Calu3 (cell line): ENCODE measurements at regions of chr5 and their contacts with region 1.

Region 1: GRCh38 chr5:104800436-104801048 is 1238.0 kb upstream of the NUDT12 start:
- DNase-seq: peak; percentile 48
- H3K4me3 Mint-ChIP-seq: no peak overlapping the region
- H3K27ac Mint-ChIP-seq: no peak overlapping the region
- H3K4me1 Mint-ChIP-seq: no peaks in the 10 kb centered on the region
- H3K27me3 Mint-ChIP-seq: no peaks in the 10 kb centered on the region
- CTCF ChIP-seq: peak; percentile 81

Region 2: DNA sequence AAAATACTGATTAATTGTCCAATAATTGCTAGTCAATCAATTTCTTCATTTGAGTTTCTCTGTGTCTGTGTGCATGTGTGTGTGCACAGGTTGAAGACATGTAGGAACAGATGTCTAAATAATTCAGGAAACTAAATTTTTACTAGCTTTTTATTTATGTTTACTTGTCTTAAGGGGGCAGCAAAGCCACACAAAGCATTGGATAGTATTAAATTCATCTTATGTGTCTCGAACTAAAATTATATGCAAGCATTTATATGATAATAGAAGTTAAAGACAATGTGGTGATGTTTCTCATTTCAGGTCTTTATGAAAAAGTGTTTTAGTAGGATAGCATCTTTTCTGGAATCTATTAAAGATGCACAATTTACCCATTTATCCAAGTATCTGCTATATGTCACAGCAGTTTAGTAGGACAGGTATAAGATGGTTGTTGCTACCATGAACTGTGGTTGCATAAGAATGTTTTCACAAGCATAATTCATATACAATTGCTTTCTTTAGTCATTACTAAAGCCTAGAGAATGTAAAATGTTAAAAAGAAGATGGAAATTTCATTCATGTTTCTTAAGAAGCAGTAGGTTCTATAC is 453.3 kb before region 1 on chr5:
- CTCF ChIA-PET with region 1: interaction called, 5 read pairs
- intact Hi-C with region 1: loop called (anchors 1 kb)
- DNase-seq: no peak
- H3K4me3 Mint-ChIP-seq: no peak overlapping the region
- H3K27ac Mint-ChIP-seq: no peak overlapping the region
- H3K4me1 Mint-ChIP-seq: no peaks in the 10 kb centered on the region
- H3K27me3 Mint-ChIP-seq: no peaks in the 10 kb centered on the region
- CTCF ChIP-seq: no peak

Region 3: DNA sequence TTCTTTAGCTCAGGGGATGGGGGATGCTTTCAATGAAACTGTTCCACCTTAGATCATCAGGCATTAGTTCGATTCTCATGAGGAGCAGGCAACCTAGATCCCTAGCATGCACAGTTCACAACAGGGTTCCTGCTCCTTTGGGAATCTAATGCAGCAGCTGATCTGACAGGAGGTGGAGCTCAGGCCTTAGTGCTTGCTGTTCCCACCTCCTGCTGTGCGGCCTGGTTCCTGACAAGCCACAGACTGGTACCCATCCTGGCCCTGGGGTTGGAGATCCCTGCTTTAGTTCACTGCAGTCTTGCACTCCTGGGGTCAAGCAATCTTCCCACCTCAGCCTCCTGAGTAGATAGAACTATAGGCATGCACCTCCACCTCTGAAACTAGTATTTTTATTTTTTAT is 131.9 kb after region 1 on chr5:
- CTCF ChIA-PET with region 1: no interaction called
- intact Hi-C with region 1: no loop called
- DNase-seq: no peak
- H3K4me3 Mint-ChIP-seq: no peak overlapping the region
- H3K27ac Mint-ChIP-seq: no peak overlapping the region
- H3K4me1 Mint-ChIP-seq: no peaks in the 10 kb centered on the region
- H3K27me3 Mint-ChIP-seq: no peaks in the 10 kb centered on the region
- CTCF ChIP-seq: no peak